Activated CD4-positive, alpha-beta memory T cell treated with anti-CD3 and anti-CD28 coated beads for 36 hours (primary cell): ENCODE measurements at regions of chr7 and their contacts with region 1.

Region 1: DNA sequence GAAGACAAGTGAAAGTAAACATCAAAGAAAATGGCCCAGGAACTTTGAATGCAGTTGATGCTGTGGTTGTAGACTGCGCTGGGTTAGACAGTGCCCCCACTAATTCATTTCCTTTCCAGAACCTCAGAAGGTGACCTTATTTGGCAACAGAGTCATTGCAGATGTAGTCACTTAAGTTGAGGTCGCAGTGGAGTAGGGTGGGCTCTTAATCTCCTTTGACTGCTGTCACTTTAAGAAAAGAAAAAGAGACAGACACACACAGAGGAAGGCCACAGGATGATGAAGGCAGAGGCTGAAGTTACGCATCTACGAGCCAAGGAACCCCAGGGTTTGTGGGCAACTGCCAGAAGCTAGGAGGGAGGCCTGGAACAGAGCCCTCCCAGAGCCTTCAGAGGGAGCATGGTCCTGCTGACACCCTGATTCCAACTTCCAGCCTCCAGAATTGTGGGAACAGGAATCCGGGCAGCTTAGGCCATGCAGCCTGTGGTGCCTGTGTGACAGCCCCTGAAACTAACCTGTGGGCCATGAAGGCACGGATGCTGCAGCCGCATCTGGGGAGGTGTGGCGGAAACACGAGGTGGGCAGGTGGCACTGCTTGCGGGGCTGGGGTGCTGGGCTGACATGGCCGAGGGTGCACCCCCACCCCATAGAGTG is 107.6 kb downstream of the PRKAG2 start:
- DNase-seq: peak; percentile 61
- H3K4me3 Mint-ChIP-seq: peak overlapping the region; percentile 24
- H3K27ac Mint-ChIP-seq: peak overlapping the region; percentile 87
- H3K4me1 Mint-ChIP-seq: peaks cover 47% of the 10 kb centered on the region
- H3K27me3 Mint-ChIP-seq: no peaks in the 10 kb centered on the region

Region 2: DNA sequence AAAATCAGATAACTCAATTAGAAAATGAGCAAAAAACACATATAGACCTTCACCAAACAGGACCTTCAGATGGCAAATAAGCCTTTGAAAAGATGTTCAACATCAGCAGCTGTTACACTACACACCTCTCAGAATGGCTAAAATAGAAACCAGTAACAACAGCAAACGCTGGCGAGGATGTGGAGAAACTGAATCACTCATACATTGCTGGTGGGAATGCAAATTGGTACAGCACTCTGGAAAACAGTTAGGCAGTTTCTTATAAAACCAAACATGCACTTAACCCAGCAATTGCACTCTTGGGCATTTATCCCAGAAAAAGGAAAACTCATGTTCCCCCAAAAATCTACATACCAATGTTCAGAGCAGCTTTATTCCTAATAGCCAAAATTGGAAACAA is 483.2 kb before region 1 on chr7:
- CTCF ChIA-PET with region 1: no interaction called
- POLR2A ChIA-PET with region 1: no interaction called
- intact Hi-C with region 1: no loop called
- DNase-seq: peak; percentile 59
- H3K4me3 Mint-ChIP-seq: no peak overlapping the region
- H3K27ac Mint-ChIP-seq: no peak overlapping the region
- H3K4me1 Mint-ChIP-seq: peaks cover 4% of the 10 kb centered on the region
- H3K27me3 Mint-ChIP-seq: peaks cover 6% of the 10 kb centered on the region

Region 3: GRCh38 chr7:151744656-151745638 is 24.4 kb before region 1 on chr7:
- CTCF ChIA-PET with region 1: no interaction called
- POLR2A ChIA-PET with region 1: no interaction called
- intact Hi-C with region 1: loop called (anchors 1 kb)
- DNase-seq: peak; percentile 80
- H3K4me3 Mint-ChIP-seq: no peak overlapping the region
- H3K27ac Mint-ChIP-seq: no peak overlapping the region
- H3K4me1 Mint-ChIP-seq: peaks cover 41% of the 10 kb centered on the region
- H3K27me3 Mint-ChIP-seq: no peaks in the 10 kb centered on the region

Region 4: GRCh38 chr7:151936207-151936606 is 166.9 kb after region 1 on chr7:
- CTCF ChIA-PET with region 1: no interaction called
- POLR2A ChIA-PET with region 1: no interaction called
- intact Hi-C with region 1: loop called (anchors 1 kb)
- DNase-seq: no peak
- H3K4me3 Mint-ChIP-seq: peak overlapping the region; percentile 31
- H3K27ac Mint-ChIP-seq: peak overlapping the region; percentile 52
- H3K4me1 Mint-ChIP-seq: peaks cover 17% of the 10 kb centered on the region
- H3K27me3 Mint-ChIP-seq: peaks cover 2% of the 10 kb centered on the region